Mammary epithelial cell (primary cell): ENCODE measurements at regions of chr17 and their contacts with region 1.

Region 1: DNA sequence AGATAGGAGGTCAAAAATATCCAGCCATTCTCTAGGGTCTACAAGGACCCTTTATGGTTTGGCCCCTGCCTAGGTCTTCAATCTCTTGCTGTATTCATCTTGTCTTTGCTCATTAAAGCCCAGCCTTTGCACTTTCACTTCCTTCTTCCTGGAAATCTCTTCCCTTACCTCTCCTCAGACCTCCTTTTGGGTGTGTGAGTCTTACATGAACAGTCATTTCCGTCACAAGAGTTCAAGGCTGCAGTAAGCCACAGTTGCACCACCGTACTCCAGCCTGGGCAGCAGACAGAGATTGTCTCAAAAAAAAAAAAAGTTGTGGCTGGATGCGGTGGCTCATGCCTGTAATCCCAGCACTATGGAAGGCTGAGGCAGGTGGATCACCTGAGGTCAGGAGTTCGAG is 6.0 kb upstream of the ATP1B2 start:
- DNase-seq: no peak
- H3K4me3 ChIP-seq: no peak overlapping the region
- H3K27ac ChIP-seq: no peak overlapping the region
- H3K4me1 ChIP-seq: no peaks in the 10 kb centered on the region
- H3K27me3 ChIP-seq: no peaks in the 10 kb centered on the region
- CTCF ChIP-seq: no peak

Region 2: DNA sequence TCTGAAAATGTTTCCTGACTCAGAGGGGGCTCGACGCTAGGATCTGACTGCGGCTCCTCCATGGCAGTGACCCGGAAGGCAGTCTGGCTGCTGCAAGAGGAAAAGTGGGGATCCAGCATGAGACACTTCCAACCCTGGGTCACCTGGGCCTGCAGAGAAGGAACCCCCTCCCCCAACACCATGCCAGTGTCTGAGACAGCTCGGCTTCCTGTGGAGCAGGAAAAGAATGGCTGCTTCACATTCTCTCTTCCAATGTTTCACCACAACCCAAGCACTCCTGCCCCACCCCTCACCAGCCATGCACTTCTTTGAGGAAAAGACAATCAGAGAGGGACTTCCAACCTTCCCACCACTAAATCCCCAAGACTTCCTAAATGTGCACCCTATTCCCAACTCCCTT is 31.8 kb after region 1 on chr17:
- CTCF ChIA-PET with region 1: no interaction called
- dilution Hi-C with region 1: loop called (anchors 5 kb)
- in situ Hi-C with region 1: no loop called
- intact Hi-C with region 1: no loop called
- DNase-seq: no peak
- H3K4me3 ChIP-seq: no peak overlapping the region
- H3K27ac ChIP-seq: no peak overlapping the region
- H3K4me1 ChIP-seq: no peaks in the 10 kb centered on the region
- H3K27me3 ChIP-seq: no peaks in the 10 kb centered on the region
- CTCF ChIP-seq: no peak

Region 3: GRCh38 chr17:7844292-7845154 is 199.7 kb after region 1 on chr17:
- CTCF ChIA-PET with region 1: no interaction called
- dilution Hi-C with region 1: no loop called
- in situ Hi-C with region 1: no loop called
- intact Hi-C with region 1: no loop called
- DNase-seq: peak; percentile 94
- H3K4me3 ChIP-seq: peak overlapping the region; percentile 60 to 75 (median 71)
- H3K27ac ChIP-seq: peak overlapping the region; percentile 96
- H3K4me1 ChIP-seq: peaks cover 26% of the 10 kb centered on the region
- H3K27me3 ChIP-seq: no peaks in the 10 kb centered on the region
- CTCF ChIP-seq: no peak